ENCODE measurements at regions of chr19 and their contacts with region 1.

Region 1: DNA sequence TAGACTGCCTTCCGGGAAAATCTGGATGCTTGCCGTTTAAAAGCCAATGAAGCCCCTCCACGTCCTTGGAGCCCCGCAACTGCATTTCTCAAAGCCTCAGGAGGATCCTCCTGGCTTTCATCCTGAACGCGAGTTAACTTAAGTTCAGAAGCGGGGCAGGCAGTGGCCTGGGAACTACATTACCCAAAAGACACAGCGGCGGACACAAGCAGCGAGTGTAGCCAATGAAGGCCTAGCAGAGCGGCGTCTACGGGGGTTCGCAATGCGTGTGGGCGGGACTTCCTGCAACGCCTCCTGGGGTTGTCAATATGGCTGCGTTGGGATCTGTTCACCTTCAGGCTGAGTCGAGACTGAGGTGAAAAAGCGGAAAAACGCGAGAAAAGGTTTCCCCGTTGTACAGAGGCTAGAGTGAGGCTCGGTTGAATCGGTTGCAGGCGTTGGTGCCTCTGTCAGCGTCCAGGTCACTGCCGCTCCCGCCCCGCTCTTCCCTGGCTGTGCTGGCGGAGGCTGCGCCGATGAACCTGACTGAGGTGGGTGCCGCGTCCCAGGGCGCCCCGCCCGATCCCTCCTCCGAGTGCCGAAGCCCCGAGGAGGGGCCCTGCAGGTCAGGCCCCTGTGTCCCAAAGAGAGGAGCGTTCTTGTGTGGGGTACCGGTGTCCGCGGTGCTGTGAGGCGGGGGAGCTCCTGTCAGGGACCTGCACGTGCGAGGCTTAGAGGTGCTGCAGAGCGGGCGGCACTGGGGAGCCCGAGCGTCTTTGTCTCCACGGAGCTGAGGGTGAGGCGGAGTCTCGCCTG is at the start of gene ZNF17:
- DNase-seq: peak; percentile 81 to 96 (median 90)
- ATAC-seq: peak; percentile 99
- H3K4me3 ChIP-seq: peak within 1 kb of the TSS; percentile 79
- H3K4me3 Mint-ChIP-seq: peak within 1 kb of the TSS; percentile 97
- H3K27ac ChIP-seq: peak within 1 kb of the TSS; percentile 58 to 68
- H3K27ac Mint-ChIP-seq: peak within 1 kb of the TSS; percentile 91
- H3K4me1 ChIP-seq: peaks cover 20% of the 10 kb centered on the region
- H3K4me1 Mint-ChIP-seq: peaks cover 39% of the 10 kb centered on the region
- H3K27me3 ChIP-seq: no peaks in the 10 kb centered on the region
- H3K27me3 Mint-ChIP-seq: no peaks in the 10 kb centered on the region
- CTCF ChIP-seq: no peak
- total RNA-seq, gene ZNF17: 9.3 to 10.0 TPM

Region 2: DNA sequence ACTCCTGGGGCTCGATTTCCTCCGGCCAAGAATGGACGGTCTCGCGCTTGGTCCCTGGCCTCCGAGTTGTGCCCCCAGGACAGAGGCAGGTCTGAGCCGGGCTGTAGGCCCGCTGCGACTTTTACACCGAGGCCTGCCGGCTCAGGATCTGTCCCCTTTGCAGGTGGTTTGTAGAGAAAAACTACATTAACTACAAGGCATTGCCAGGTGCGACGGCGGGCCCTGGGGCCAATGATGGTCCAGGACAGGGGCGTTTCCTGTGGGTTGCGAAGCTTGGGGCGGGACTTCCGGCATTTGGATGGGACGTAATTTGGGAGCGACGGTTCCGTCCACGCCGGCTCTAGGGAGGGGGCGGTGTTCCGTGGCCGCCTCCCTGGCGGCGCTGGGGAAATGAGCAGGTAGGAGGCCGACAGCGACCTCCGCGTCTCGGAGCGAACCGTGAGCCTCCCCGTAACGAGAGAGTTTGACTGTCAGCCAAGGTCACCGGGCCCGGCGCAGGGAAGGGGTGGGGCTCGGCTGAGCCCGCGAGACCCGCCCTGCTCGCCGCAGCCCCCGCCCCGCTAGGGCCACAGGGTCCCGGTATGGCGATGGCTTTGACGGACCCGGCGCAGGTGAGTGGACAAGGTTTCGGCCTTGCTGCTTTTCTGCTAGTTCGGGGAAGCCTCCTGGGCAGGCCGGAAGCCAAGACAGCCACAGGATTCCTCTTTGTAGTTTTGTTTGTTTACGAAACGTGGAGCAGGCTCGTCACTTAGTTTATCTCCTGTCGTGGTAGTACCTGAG is 170.6 kb before region 1 on chr19 and contains the start of gene ZNF805:
- CTCF ChIA-PET with region 1: no interaction called
- POLR2A ChIA-PET with region 1: no interaction called
- intact Hi-C with region 1: loop called in 1 of 2 experiments (anchors 1 kb)
- DNase-seq: peak; percentile 94 to 98 (median 96)
- ATAC-seq: peak; percentile 88
- H3K4me3 ChIP-seq: peak within 1 kb of the TSS; percentile 89
- H3K4me3 Mint-ChIP-seq: peak within 1 kb of the TSS; percentile 93
- H3K27ac ChIP-seq: peak within 1 kb of the TSS; percentile 89 to 96
- H3K27ac Mint-ChIP-seq: peak within 1 kb of the TSS; percentile 92
- H3K4me1 ChIP-seq: peaks cover 32% of the 10 kb centered on the region
- H3K4me1 Mint-ChIP-seq: peaks cover 40% of the 10 kb centered on the region
- H3K27me3 ChIP-seq: no peaks in the 10 kb centered on the region
- H3K27me3 Mint-ChIP-seq: no peaks in the 10 kb centered on the region
- CTCF ChIP-seq: no peak
- total RNA-seq, gene ZNF805: 33.1 to 33.7 TPM

Region 3: GRCh38 chr19:57366776-57367175 is 44.3 kb before region 1 on chr19:
- CTCF ChIA-PET with region 1: no interaction called
- POLR2A ChIA-PET with region 1: no interaction called
- intact Hi-C with region 1: no loop called
- DNase-seq: no peak
- ATAC-seq: no peak
- H3K4me3 ChIP-seq: no peak overlapping the region
- H3K4me3 Mint-ChIP-seq: peak overlapping the region; percentile 38
- H3K27ac ChIP-seq: no peak overlapping the region
- H3K27ac Mint-ChIP-seq: no peak overlapping the region
- H3K4me1 ChIP-seq: peaks cover 15% of the 10 kb centered on the region
- H3K4me1 Mint-ChIP-seq: peaks cover 23% of the 10 kb centered on the region
- H3K27me3 ChIP-seq: no peaks in the 10 kb centered on the region
- H3K27me3 Mint-ChIP-seq: peaks cover 3% of the 10 kb centered on the region
- CTCF ChIP-seq: no peak

Region 4: GRCh38 chr19:57527136-57527881 is 116.2 kb after region 1 on chr19 and contains the start of gene ZNF549:
- CTCF ChIA-PET with region 1: no interaction called
- POLR2A ChIA-PET with region 1: no interaction called
- intact Hi-C with region 1: loop called in 1 of 2 experiments (anchors 5 kb)
- DNase-seq: peak; percentile 76 to 96 (median 83)
- ATAC-seq: peak; percentile 97
- H3K4me3 ChIP-seq: peak within 1 kb of the TSS; percentile 96
- H3K4me3 Mint-ChIP-seq: peak within 1 kb of the TSS; percentile 97
- H3K27ac ChIP-seq: peak within 1 kb of the TSS; percentile 77 to 81
- H3K27ac Mint-ChIP-seq: peak within 1 kb of the TSS; percentile 94
- H3K4me1 ChIP-seq: peaks cover 18% of the 10 kb centered on the region
- H3K4me1 Mint-ChIP-seq: peaks cover 23% of the 10 kb centered on the region
- H3K27me3 ChIP-seq: no peaks in the 10 kb centered on the region
- H3K27me3 Mint-ChIP-seq: no peaks in the 10 kb centered on the region
- CTCF ChIP-seq: no peak
- total RNA-seq, gene ZNF549: 10.1 to 11.1 TPM

Region 5: GRCh38 chr19:57682226-57682766 is 271.2 kb after region 1 on chr19:
- CTCF ChIA-PET with region 1: no interaction called
- POLR2A ChIA-PET with region 1: no interaction called
- intact Hi-C with region 1: loop called in 1 of 2 experiments (anchors 5 kb)
- DNase-seq: no peak
- ATAC-seq: no peak
- H3K4me3 ChIP-seq: peak overlapping the region; percentile 81
- H3K4me3 Mint-ChIP-seq: peak overlapping the region; percentile 98
- H3K27ac ChIP-seq: peak overlapping the region; percentile 29 to 55
- H3K27ac Mint-ChIP-seq: peak overlapping the region; percentile 93
- H3K4me1 ChIP-seq: peaks cover 26% of the 10 kb centered on the region
- H3K4me1 Mint-ChIP-seq: peaks cover 43% of the 10 kb centered on the region
- H3K27me3 ChIP-seq: peaks cover 4 to 8% of the 10 kb centered on the region in 2 experiments
- H3K27me3 Mint-ChIP-seq: peaks cover 14% of the 10 kb centered on the region
- CTCF ChIP-seq: no peak

Region 6: DNA sequence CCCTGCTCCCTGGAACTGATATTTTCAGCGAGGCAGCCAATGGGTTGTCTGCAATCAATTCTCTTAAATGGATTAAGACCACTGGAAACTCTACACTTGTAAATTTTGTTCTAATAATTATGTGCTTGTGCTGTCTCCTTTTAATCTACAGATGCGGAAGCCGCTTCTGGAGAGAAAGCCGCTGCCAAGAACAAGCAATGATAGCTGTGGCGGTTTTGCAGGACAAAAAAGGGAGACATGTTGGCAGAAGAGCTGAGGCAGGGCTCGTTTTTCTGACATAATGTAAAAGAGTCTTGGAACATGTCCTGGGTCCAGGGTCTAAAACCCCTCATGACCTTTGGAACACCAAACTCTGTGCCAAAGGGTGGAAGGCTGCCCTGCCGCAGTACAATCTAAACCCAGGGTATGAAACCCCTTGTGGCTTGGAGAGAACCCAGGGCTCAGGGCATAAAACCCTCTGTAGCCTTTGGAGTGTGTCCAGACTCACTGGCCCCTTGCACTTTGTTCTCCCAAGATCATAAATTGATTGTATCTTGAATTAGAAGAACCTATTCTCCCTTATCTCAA is 492.6 kb after region 1 on chr19:
- CTCF ChIA-PET with region 1: no interaction called
- POLR2A ChIA-PET with region 1: no interaction called
- intact Hi-C with region 1: loop called in 1 of 2 experiments (anchors 1 kb)
- DNase-seq: no peak
- ATAC-seq: no peak
- H3K4me3 ChIP-seq: no peak overlapping the region
- H3K4me3 Mint-ChIP-seq: no peak overlapping the region
- H3K27ac ChIP-seq: no peak overlapping the region
- H3K27ac Mint-ChIP-seq: peak overlapping the region; percentile 27
- H3K4me1 ChIP-seq: no peaks in the 10 kb centered on the region
- H3K4me1 Mint-ChIP-seq: peaks cover 5% of the 10 kb centered on the region
- H3K27me3 ChIP-seq: no peaks in the 10 kb centered on the region
- H3K27me3 Mint-ChIP-seq: no peaks in the 10 kb centered on the region
- CTCF ChIP-seq: no peak